Natural killer cell (primary cell): ENCODE measurements at regions of chr11 and their contacts with region 1.

Region 1: DNA sequence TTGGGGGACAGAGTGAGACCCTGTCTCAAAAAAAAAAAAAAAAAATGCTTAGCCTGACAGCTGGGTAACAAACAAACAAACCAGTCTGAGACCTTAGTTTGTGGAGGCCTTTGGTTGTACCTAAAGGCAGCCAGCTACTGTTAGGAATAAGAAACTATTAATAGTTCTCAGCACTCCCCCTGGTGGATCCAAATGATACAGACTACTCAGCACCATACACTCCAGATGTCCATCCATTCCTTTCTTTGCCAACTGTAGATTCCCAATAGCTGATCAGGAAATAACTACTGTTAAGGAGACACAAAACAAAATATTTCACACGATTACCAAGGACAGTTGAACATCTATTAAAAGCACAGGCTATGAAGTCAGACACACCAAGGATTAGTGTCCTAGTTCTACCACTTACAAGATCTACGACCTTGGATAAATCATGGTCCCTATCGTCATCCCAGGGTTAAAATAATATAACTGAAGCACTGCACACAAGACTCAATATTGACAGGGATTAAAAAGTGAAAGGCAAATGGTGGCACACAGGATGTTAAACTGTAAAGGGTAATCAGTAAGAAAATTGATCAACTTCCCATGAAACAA is 17.2 kb downstream of the CLDN25 start:
- DNase-seq: peak in 1 of 2 donors; percentile 55
- ATAC-seq: peak; percentile 62 to 74 (median 70)
- H3K4me3 ChIP-seq: no peak overlapping the region
- H3K4me3 Mint-ChIP-seq: no peak overlapping the region
- H3K27ac ChIP-seq: no peak overlapping the region
- H3K27ac Mint-ChIP-seq: peak overlapping the region in 1 of 2 donors; percentile 57
- H3K4me1 ChIP-seq: no peaks in the 10 kb centered on the region
- H3K4me1 Mint-ChIP-seq: no peaks in the 10 kb centered on the region
- H3K27me3 ChIP-seq: no peaks in the 10 kb centered on the region
- H3K27me3 Mint-ChIP-seq: no peaks in the 10 kb centered on the region
- CTCF ChIP-seq: peak; percentile 64

Region 2: GRCh38 chr11:113305440-113306336 is 491.1 kb before region 1 on chr11:
- intact Hi-C with region 1: loop called (anchors 2 kb)
- DNase-seq: peak; percentile 60 to 85
- ATAC-seq: peak; percentile 81 to 98 (median 92)
- H3K4me3 ChIP-seq: no peak overlapping the region
- H3K4me3 Mint-ChIP-seq: no peak overlapping the region
- H3K27ac ChIP-seq: no peak overlapping the region
- H3K27ac Mint-ChIP-seq: no peak overlapping the region
- H3K4me1 ChIP-seq: no peaks in the 10 kb centered on the region
- H3K4me1 Mint-ChIP-seq: no peaks in the 10 kb centered on the region
- H3K27me3 ChIP-seq: no peaks in the 10 kb centered on the region
- H3K27me3 Mint-ChIP-seq: peaks cover 8 to 16% of the 10 kb centered on the region in 2 donors
- CTCF ChIP-seq: peak; percentile 80

Region 3: GRCh38 chr11:113831314-113831713 is 34.6 kb after region 1 on chr11:
- intact Hi-C with region 1: no loop called
- DNase-seq: no peak
- ATAC-seq: no peak
- H3K4me3 ChIP-seq: no peak overlapping the region
- H3K4me3 Mint-ChIP-seq: no peak overlapping the region
- H3K27ac ChIP-seq: no peak overlapping the region
- H3K27ac Mint-ChIP-seq: peak overlapping the region; percentile 52 to 63
- H3K4me1 ChIP-seq: no peaks in the 10 kb centered on the region
- H3K4me1 Mint-ChIP-seq: peaks cover 0 to 5% of the 10 kb centered on the region in 2 donors
- H3K27me3 ChIP-seq: no peaks in the 10 kb centered on the region
- H3K27me3 Mint-ChIP-seq: no peaks in the 10 kb centered on the region
- CTCF ChIP-seq: no peak

Region 4: DNA sequence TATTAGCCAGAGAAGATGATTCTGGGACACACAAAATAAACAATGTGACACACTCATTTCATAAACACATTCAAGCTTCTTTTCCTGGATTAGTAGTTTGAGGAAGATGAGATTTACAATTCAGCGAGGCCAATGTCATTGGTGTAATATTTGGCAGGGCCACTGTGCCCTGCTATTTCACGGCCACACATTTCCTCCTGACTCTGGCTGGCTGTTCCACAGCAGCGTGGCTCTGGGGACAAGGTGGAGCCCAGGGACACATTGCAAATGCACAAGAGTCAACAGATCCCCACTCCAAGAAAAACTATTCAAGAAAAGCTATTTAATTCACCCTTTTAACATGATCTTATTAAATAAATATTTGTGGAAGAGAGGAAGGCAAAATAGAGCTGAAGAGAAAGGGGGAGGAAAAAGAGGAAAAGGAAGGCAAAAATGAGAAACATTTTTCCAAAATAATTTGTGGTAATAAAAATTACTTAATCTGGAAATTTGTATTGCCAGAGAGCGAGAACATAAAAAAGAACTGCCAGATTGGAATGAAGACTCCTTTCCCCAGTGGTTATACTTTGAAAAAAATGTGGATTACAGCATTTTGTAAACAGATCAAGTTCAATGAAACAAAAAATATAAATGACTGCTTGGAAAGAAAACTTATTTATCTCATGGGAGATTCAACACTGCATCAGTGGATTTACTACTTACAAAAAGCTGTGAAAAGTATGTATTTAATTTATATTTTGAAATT is 908.7 kb after region 1 on chr11:
- intact Hi-C with region 1: no loop called
- DNase-seq: no peak
- ATAC-seq: no peak
- H3K4me3 ChIP-seq: no peak overlapping the region
- H3K4me3 Mint-ChIP-seq: no peak overlapping the region
- H3K27ac ChIP-seq: no peak overlapping the region
- H3K27ac Mint-ChIP-seq: no peak overlapping the region
- H3K4me1 ChIP-seq: no peaks in the 10 kb centered on the region
- H3K4me1 Mint-ChIP-seq: no peaks in the 10 kb centered on the region
- H3K27me3 ChIP-seq: no peaks in the 10 kb centered on the region
- H3K27me3 Mint-ChIP-seq: peaks cover 7 to 8% of the 10 kb centered on the region in 2 donors
- CTCF ChIP-seq: no peak